ENCODE measurements at regions of chr11 and their contacts with region 1.

Region 1: GRCh38 chr11:65366340-65366773 is 11.8 kb downstream of the TIGD3 start:
- DNase-seq: peak; percentile 73
- ATAC-seq: peak; percentile 58
- H3K4me3 ChIP-seq: no peak overlapping the region
- H3K4me3 Mint-ChIP-seq: no peak overlapping the region
- H3K27ac ChIP-seq: no peak overlapping the region
- H3K27ac Mint-ChIP-seq: no peak overlapping the region
- H3K4me1 ChIP-seq: peaks cover 17 to 33% of the 10 kb centered on the region in 2 donors
- H3K4me1 Mint-ChIP-seq: peaks cover 21% of the 10 kb centered on the region
- H3K27me3 ChIP-seq: no peaks in the 10 kb centered on the region
- H3K27me3 Mint-ChIP-seq: no peaks in the 10 kb centered on the region
- CTCF ChIP-seq: peak; percentile 81

Region 2: GRCh38 chr11:65354265-65355012 is 11.9 kb before region 1 on chr11 and contains the start of gene TIGD3:
- CTCF ChIA-PET with region 1: interaction called, 16 read pairs
- POLR2A ChIA-PET with region 1: interaction called, 3 read pairs
- intact Hi-C with region 1: loop called (anchors 1 kb)
- DNase-seq: peak; percentile 97
- ATAC-seq: peak; percentile 96
- H3K4me3 ChIP-seq: peak within 1 kb of the TSS; percentile 26 to 79 (median 65)
- H3K4me3 Mint-ChIP-seq: peak within 1 kb of the TSS; percentile 95
- H3K27ac ChIP-seq: peak within 1 kb of the TSS in 1 of 2 donors; percentile 18
- H3K27ac Mint-ChIP-seq: peak within 1 kb of the TSS; percentile 92
- H3K4me1 ChIP-seq: peaks cover 11 to 16% of the 10 kb centered on the region in 2 donors
- H3K4me1 Mint-ChIP-seq: peaks cover 20% of the 10 kb centered on the region
- H3K27me3 ChIP-seq: no peaks in the 10 kb centered on the region
- H3K27me3 Mint-ChIP-seq: no peaks in the 10 kb centered on the region
- CTCF ChIP-seq: no peak
- total RNA-seq, gene TIGD3: 6.1 and 7.5 TPM in 2 replicates

Region 3: DNA sequence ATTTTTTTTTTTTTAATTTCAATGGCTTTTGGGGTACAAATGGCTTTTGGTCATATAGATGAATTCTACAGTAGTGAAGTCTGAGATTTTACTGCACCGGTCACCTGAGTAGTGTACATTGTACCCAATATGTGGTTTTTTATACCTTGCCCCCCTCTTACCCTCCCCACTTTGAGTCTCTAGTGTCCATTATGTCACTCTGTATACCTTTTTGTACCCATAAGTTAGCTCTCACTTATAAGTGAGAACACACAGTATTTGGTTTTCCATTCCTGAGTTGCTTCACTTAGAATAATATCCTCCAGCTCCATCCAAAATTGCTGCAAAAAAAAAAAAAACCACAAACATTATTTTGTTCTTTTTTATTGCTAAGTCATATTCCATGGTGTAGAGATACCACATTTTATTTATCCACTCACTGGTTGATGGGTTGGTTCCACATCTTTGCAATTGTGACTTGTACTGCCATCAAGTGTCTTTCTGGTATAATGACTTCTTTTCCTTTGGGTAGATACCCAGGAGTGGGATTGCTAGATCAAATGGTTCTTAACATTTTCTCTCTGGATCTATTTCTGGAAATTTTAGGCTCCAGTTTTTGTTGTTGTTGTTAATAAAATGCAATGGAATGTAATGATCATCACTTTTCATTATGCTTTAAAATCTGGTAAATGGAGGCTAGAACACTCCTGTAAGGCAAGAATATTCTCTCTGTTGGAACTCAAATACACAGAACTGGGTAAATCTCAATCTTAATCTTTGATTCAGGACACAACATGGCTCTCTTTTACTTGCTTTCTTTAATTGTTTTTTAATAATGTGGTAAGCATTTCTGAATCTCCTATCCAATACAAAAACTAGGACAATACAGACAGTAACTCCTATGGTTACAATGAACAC is 66.6 kb after region 1 on chr11:
- CTCF ChIA-PET with region 1: interaction called, 5 read pairs
- POLR2A ChIA-PET with region 1: no interaction called
- intact Hi-C with region 1: loop called (anchors 1 kb)
- DNase-seq: peak; percentile 75
- ATAC-seq: peak; percentile 20
- H3K4me3 ChIP-seq: no peak overlapping the region
- H3K4me3 Mint-ChIP-seq: peak overlapping the region; percentile 32
- H3K27ac ChIP-seq: no peak overlapping the region
- H3K27ac Mint-ChIP-seq: peak overlapping the region; percentile 47
- H3K4me1 ChIP-seq: peaks cover 48 to 53% of the 10 kb centered on the region in 2 donors
- H3K4me1 Mint-ChIP-seq: peaks cover 61% of the 10 kb centered on the region
- H3K27me3 ChIP-seq: no peaks in the 10 kb centered on the region
- H3K27me3 Mint-ChIP-seq: no peaks in the 10 kb centered on the region
- CTCF ChIP-seq: peak; percentile 62

Region 4: GRCh38 chr11:65588199-65589054 is 222.1 kb after region 1 on chr11:
- CTCF ChIA-PET with region 1: interaction called, 5 read pairs
- POLR2A ChIA-PET with region 1: interaction called, 4 read pairs
- intact Hi-C with region 1: loop called (anchors 2 kb)
- DNase-seq: peak; percentile 87
- ATAC-seq: peak; percentile 76
- H3K4me3 ChIP-seq: peak overlapping the region in 3 of 5 experiments; percentile 9 to 26 (median 13)
- H3K4me3 Mint-ChIP-seq: peak overlapping the region; percentile 75
- H3K27ac ChIP-seq: peak overlapping the region; percentile 82 to 92
- H3K27ac Mint-ChIP-seq: peak overlapping the region; percentile 93
- H3K4me1 ChIP-seq: peaks cover 27 to 41% of the 10 kb centered on the region in 2 donors
- H3K4me1 Mint-ChIP-seq: peaks cover 38% of the 10 kb centered on the region
- H3K27me3 ChIP-seq: no peaks in the 10 kb centered on the region
- H3K27me3 Mint-ChIP-seq: no peaks in the 10 kb centered on the region
- CTCF ChIP-seq: peak; percentile 83

Measured in B cell (primary cell).